Activated CD8-positive, alpha-beta T cell treated with anti-CD3 and anti-CD28 coated beads, Interleukin-2, amount 10 ng/mL, durations not matched to agents 7 days and 5 days (primary cell): ENCODE measurements at regions of chr4 and their contacts with region 1.

Region 1: GRCh38 chr4:72312032-72312650 is 256.9 kb downstream of the ADAMTS3 start:
- DNase-seq: no peak
- ATAC-seq: no peak
- H3K4me3 Mint-ChIP-seq: no peak overlapping the region
- H3K27ac Mint-ChIP-seq: no peak overlapping the region
- H3K4me1 Mint-ChIP-seq: no peaks in the 10 kb centered on the region
- H3K27me3 Mint-ChIP-seq: no peaks in the 10 kb centered on the region

Region 2: DNA sequence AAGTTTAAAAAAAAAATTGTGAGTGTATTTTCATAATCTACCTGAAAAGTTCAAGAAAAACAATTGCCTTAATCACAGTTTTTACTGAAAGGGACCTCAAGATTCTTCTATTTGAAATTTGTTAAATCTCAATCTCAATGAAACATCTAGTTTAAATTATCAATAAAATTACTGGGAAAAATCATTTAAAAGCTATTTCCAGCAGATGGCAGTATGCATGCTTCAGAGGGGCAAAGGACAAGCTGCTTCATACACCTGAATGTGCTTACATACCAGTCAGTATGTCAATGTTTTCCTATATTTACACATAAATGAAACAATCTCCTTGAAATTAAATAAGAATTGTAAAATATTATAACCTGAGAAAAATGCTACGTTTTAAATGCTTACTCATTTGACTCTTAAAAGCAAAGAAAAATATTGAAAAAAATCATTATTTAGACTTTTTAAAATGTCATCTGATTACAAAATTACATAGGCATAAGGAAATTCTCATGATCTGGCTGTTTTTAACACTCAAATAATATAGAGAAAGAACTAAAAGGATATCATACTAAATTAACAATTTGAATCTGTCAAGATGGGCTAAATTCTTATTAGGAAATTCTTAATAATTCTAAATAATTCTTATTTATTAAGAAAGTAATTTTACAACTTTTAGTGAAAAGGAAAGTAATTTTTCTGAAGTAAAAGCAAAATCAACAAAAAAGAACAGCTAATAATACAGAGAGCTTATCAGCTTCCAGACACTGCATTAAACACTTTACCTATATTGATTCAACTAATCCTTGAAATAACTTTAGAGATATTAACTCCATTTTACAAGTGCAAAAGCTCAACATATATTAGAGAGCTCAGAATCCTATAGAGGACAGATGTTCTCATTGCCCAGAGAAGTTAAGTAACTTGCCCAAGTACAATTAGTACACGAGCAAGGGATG is 14.8 kb after region 1 on chr4:
- CTCF ChIA-PET with region 1: interaction called, 10 read pairs
- POLR2A ChIA-PET with region 1: no interaction called
- DNase-seq: no peak
- ATAC-seq: no peak
- H3K4me3 Mint-ChIP-seq: no peak overlapping the region
- H3K27ac Mint-ChIP-seq: no peak overlapping the region
- H3K4me1 Mint-ChIP-seq: no peaks in the 10 kb centered on the region
- H3K27me3 Mint-ChIP-seq: peaks cover 8% of the 10 kb centered on the region

Region 3: DNA sequence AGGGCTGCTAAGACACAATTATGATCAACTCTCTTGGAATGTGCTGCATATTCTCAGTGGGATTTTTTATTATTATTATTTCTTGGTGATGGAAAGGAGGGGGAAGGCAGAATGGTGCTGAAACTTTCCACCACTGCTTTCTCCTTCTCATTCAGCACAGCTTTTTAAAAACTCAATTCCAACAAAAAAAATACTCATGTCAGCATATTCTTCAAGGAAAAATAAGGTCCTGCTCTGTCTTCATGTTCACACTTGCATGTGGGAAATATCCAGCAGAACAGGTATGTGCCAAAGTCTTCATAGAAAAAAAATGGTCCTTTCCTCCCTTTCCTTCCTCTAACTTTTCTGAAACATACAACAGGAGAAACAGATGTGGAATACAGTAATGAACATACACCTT is 400.9 kb after region 1 on chr4:
- CTCF ChIA-PET with region 1: no interaction called
- POLR2A ChIA-PET with region 1: no interaction called
- DNase-seq: no peak
- ATAC-seq: no peak
- H3K4me3 Mint-ChIP-seq: no peak overlapping the region
- H3K27ac Mint-ChIP-seq: no peak overlapping the region
- H3K4me1 Mint-ChIP-seq: no peaks in the 10 kb centered on the region
- H3K27me3 Mint-ChIP-seq: no peaks in the 10 kb centered on the region